ENCODE measurements at regions of chr1 and their contacts with region 1.

Region 1: GRCh38 chr1:204480515-204480914 is 14.1 kb downstream of the PIK3C2B start:
- DNase-seq: peak; percentile 73
- ATAC-seq: peak; percentile 53
- H3K4me3 ChIP-seq: peak overlapping the region in 3 of 5 experiments; percentile 26 to 32 (median 32)
- H3K4me3 Mint-ChIP-seq: peak overlapping the region; percentile 71
- H3K27ac ChIP-seq: peak overlapping the region; percentile 78 to 95
- H3K27ac Mint-ChIP-seq: peak overlapping the region; percentile 98
- H3K4me1 ChIP-seq: peaks cover 93 to 94% of the 10 kb centered on the region in 2 donors
- H3K4me1 Mint-ChIP-seq: peaks cover 94% of the 10 kb centered on the region
- H3K27me3 ChIP-seq: no peaks in the 10 kb centered on the region
- H3K27me3 Mint-ChIP-seq: no peaks in the 10 kb centered on the region
- CTCF ChIP-seq: no peak

Region 2: GRCh38 chr1:204025917-204026707 is 454.4 kb before region 1 on chr1:
- CTCF ChIA-PET with region 1: no interaction called
- POLR2A ChIA-PET with region 1: no interaction called
- intact Hi-C with region 1: no loop called
- DNase-seq: no peak
- ATAC-seq: no peak
- H3K4me3 ChIP-seq: no peak overlapping the region
- H3K4me3 Mint-ChIP-seq: no peak overlapping the region
- H3K27ac ChIP-seq: no peak overlapping the region
- H3K27ac Mint-ChIP-seq: no peak overlapping the region
- H3K4me1 ChIP-seq: no peaks in the 10 kb centered on the region
- H3K4me1 Mint-ChIP-seq: no peaks in the 10 kb centered on the region
- H3K27me3 ChIP-seq: peaks cover 0 to 6% (median 3%) of the 10 kb centered on the region in 4 experiments
- H3K27me3 Mint-ChIP-seq: peaks cover 24% of the 10 kb centered on the region
- CTCF ChIP-seq: no peak

Region 3: GRCh38 chr1:204465546-204466415 is 14.7 kb before region 1 on chr1:
- CTCF ChIA-PET with region 1: interaction called, 58 read pairs
- POLR2A ChIA-PET with region 1: interaction called, 12 read pairs
- intact Hi-C with region 1: loop called (anchors 1 kb)
- DNase-seq: peak; percentile 57
- ATAC-seq: peak; percentile 49
- H3K4me3 ChIP-seq: peak overlapping the region in 1 of 5 experiments; percentile 2
- H3K4me3 Mint-ChIP-seq: peak overlapping the region; percentile 80
- H3K27ac ChIP-seq: peak overlapping the region; percentile 57 to 72
- H3K27ac Mint-ChIP-seq: peak overlapping the region; percentile 95
- H3K4me1 ChIP-seq: peaks cover 77 to 80% of the 10 kb centered on the region in 2 donors
- H3K4me1 Mint-ChIP-seq: peaks cover 84% of the 10 kb centered on the region
- H3K27me3 ChIP-seq: no peaks in the 10 kb centered on the region
- H3K27me3 Mint-ChIP-seq: no peaks in the 10 kb centered on the region
- CTCF ChIP-seq: no peak

Measured in B cell (primary cell).